ENCODE measurements at regions of chr2 and their contacts with region 1.

Region 1: GRCh38 chr2:232815569-232815968 is 39.2 kb upstream of the KCNJ13 start:
- DNase-seq: no peak
- ATAC-seq: no peak
- H3K4me3 Mint-ChIP-seq: no peak overlapping the region
- H3K27ac Mint-ChIP-seq: no peak overlapping the region
- H3K4me1 Mint-ChIP-seq: no peaks in the 10 kb centered on the region
- H3K27me3 Mint-ChIP-seq: no peaks in the 10 kb centered on the region
- CTCF ChIP-seq: no peak

Region 2: DNA sequence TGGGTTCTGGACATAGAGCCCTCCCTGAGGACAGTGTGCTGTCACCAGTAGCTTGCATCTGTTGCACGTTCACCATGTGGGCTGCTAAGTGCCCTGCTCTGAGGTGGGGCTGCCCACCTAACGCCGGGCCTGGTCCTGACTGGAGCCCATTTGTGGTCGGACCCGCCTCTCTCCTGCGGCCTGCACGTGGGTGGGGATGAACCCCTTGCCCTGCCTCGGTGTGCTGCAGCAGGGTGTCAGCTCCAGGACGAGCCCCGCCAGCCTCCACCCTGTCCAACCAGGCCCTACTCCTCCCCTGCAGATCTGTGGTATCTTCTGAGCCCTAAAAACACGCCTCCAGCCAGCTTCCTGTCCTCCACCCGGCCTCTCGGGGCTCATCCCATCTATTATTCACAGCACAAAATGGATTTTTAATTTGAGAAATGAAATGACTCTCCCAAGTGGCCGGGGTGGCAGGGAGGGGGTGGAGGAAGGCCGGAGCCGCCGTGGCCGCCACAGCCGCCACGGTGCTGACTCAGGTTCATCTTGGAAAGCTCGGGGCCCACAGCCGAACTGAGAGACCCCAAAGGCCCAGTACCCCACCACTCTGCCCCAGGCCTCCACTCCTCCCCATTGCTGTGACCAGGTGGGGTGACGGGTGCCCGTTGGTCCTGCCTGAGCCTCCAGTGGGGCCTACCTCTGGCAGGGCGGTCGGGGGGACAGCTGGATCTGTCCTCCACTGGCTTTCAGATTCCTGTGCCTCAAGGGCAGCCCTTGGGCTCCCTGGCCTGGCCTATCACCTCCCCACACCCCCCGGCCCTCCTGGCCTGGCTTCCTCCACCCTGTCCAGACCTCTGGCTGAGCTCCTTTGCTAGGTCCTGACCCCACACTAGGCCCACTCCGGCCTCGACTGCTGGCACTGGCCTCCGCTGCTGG is 325.1 kb before region 1 on chr2:
- CTCF ChIA-PET with region 1: no interaction called
- POLR2A ChIA-PET with region 1: no interaction called
- intact Hi-C with region 1: no loop called
- DNase-seq: no peak
- ATAC-seq: no peak
- H3K4me3 Mint-ChIP-seq: no peak overlapping the region
- H3K27ac Mint-ChIP-seq: no peak overlapping the region
- H3K4me1 Mint-ChIP-seq: peaks cover 11% of the 10 kb centered on the region
- H3K27me3 Mint-ChIP-seq: peaks cover 26% of the 10 kb centered on the region
- CTCF ChIP-seq: no peak

Region 3: DNA sequence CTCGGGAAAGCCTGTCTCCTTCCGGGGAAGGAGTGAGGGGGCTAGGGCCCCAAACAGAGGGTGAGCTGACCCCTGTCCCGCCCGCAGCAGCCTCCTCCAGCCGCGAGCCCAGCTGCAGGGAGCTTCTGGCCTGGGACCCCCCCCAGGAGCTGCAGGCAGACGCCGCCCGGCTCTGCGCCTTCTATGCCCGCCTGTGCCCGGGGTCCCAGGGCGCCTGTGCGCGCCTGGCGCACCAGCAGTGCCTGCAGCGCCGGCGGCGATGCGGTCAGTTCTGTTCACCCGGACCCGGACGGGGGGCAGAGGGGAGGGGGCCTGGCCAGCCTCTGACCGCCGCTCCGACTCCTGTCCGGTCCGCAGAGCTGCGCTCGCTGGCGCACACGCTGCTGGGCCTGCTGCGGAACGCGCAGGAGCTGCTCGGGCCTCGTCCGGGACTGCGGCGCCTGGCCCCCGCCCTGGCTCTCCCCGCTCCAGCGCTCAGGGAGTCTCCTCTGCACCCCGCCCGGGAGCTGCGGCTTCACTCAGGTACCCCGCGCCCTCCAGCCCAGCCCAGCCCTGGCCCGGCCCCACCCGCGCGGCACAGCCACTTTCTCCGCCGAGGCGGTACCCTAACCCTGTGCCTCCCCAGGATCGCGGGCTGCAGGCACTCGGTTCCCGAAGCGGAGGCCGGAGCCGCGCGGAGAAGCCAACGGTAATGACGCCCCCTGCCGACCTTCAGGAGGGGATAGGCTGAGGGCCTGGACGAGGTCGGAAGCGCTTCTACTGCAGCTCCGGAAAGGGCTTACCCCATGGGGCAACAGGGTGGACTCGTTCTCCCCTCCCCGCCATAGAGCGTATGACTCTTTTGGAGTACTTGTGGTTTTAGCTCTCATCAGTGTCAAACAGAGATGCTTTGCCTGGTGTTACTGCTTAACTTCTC is 291.6 kb before region 1 on chr2:
- CTCF ChIA-PET with region 1: no interaction called
- POLR2A ChIA-PET with region 1: no interaction called
- intact Hi-C with region 1: no loop called
- DNase-seq: no peak
- ATAC-seq: peak; percentile 36
- H3K4me3 Mint-ChIP-seq: peak overlapping the region; percentile 63
- H3K27ac Mint-ChIP-seq: no peak overlapping the region
- H3K4me1 Mint-ChIP-seq: peaks cover 15% of the 10 kb centered on the region
- H3K27me3 Mint-ChIP-seq: peaks cover 48% of the 10 kb centered on the region
- CTCF ChIP-seq: no peak

Region 4: DNA sequence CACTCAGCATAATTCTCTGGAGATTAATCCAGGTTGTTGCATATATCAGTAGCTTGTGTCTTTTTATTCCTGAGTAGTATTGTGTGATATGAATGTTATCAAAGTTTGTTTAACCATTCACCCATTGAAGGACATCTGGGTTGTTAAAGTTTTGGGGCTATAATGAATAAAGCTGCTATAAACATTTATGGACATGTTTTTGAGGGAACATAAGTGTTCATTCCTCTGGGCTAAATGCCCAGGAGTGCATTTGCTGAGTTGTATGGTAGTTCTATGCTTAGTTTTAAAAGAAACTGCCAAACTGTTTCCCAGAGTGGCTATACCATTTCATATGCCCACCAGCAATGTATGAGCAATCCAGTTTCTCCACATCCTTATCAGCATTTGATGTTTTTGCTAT is 17.4 kb before region 1 on chr2:
- CTCF ChIA-PET with region 1: no interaction called
- POLR2A ChIA-PET with region 1: interaction called, 13 read pairs
- intact Hi-C with region 1: no loop called
- DNase-seq: no peak
- ATAC-seq: no peak
- H3K4me3 Mint-ChIP-seq: no peak overlapping the region
- H3K27ac Mint-ChIP-seq: no peak overlapping the region
- H3K4me1 Mint-ChIP-seq: no peaks in the 10 kb centered on the region
- H3K27me3 Mint-ChIP-seq: no peaks in the 10 kb centered on the region
- CTCF ChIP-seq: no peak

Measured in activated B cell treated with CpG ODN at 0.5 μM for 24 hours (primary cell).